Panc1 (cell line): ENCODE measurements at regions of chr3 and their contacts with region 1.

Region 1: DNA sequence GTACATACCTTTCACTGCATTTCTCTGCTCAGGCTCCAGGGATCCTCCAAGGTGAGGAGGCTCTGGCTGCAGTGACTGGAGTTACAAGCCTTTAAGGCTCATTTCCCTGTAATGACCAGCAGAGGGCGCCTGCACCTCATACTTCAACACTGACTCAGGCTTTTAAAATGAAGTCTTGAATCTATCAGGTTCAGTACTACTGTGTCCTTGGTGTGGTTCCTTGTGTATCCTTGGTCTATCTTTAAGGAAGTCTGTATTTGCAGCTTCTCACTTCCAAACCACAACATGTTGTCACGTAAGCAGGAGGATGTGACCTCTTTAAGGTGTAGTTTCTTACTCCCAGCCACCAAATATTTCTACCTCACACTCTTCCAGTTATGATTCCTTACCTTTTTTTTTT is 122.5 kb upstream of the ZBED2 start:
- DNase-seq: peak; percentile 71
- ATAC-seq: peak; percentile 98
- H3K4me3 ChIP-seq: no peak overlapping the region
- H3K27ac ChIP-seq: no peak overlapping the region
- H3K4me1 ChIP-seq: no peaks in the 10 kb centered on the region; the same call in 1 of the 2 replicates
- H3K27me3 ChIP-seq: peaks cover 2% of the 10 kb centered on the region; the same call in 1 of the 2 replicates
- CTCF ChIP-seq: peak; percentile 94

Region 2: GRCh38 chr3:111392901-111393351 is 324.7 kb before region 1 on chr3:
- CTCF ChIA-PET with region 1: no interaction called
- POLR2A ChIA-PET with region 1: no interaction called
- in situ Hi-C with region 1: no loop called
- intact Hi-C with region 1: no loop called
- DNase-seq: no peak
- ATAC-seq: no peak
- H3K4me3 ChIP-seq: no peak overlapping the region
- H3K27ac ChIP-seq: no peak overlapping the region
- H3K4me1 ChIP-seq: no peaks in the 10 kb centered on the region
- H3K27me3 ChIP-seq: no peaks in the 10 kb centered on the region
- CTCF ChIP-seq: no peak

Region 3: DNA sequence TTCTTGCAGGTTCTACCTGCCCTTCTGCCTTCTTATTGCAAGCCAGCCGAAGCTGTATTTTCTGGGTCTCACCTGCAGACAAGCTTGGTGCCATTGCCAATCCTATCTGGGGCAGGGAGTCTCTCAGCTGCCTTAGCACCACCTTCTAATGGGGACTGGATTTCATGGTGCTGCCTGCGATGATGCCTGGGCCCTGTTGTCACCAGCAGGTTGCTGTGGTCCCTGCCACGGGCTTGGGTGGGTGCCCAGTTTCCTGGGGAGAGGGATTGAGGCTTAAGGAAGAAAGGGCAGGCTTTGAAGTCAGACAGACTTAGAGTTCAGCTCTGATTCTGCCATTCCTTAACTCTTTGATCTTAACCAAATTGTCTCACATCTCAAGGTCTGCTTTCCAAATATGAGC is 263.1 kb before region 1 on chr3:
- CTCF ChIA-PET with region 1: no interaction called
- POLR2A ChIA-PET with region 1: no interaction called
- in situ Hi-C with region 1: no loop called
- intact Hi-C with region 1: no loop called
- DNase-seq: no peak
- ATAC-seq: no peak
- H3K4me3 ChIP-seq: no peak overlapping the region
- H3K27ac ChIP-seq: no peak overlapping the region
- H3K4me1 ChIP-seq: no peaks in the 10 kb centered on the region
- H3K27me3 ChIP-seq: no peaks in the 10 kb centered on the region
- CTCF ChIP-seq: no peak

Region 4: DNA sequence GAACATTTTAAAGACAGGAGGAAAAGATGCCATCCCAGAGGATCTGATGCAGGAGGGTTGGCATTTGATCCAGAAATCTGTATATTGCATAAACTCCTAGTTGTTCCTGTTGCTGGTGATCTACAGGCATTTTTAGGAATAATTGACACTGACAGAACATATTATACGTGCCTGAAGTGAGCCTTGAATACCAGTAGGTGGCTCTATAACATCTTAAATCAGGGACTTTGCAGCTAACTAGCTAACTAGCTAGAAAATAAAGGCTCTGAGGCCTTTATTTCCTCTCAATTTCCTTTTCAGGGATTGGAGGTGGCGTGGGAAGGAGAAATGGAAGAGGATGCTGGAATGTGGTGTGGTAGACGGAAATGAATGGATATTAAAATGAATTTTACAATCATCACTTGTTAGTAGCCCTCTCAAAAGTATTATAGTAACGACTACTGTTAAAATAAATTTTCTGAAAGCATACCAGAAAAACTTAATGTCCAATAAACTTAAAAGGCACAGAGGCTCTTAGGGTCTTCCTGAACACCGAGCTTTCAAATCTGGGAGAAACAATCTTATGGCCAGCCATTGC is 48.6 kb before region 1 on chr3:
- CTCF ChIA-PET with region 1: interaction called, 7 read pairs
- POLR2A ChIA-PET with region 1: no interaction called
- in situ Hi-C with region 1: no loop called
- intact Hi-C with region 1: loop called (anchors 1 kb)
- DNase-seq: peak; percentile 33
- ATAC-seq: peak; percentile 85
- H3K4me3 ChIP-seq: no peak overlapping the region
- H3K27ac ChIP-seq: no peak overlapping the region
- H3K4me1 ChIP-seq: peaks cover 5% of the 10 kb centered on the region; the same call in 1 of the 2 replicates
- H3K27me3 ChIP-seq: peaks cover 9% of the 10 kb centered on the region
- CTCF ChIP-seq: peak; percentile 80

Region 5: GRCh38 chr3:111735271-111735758 is 17.7 kb after region 1 on chr3:
- CTCF ChIA-PET with region 1: no interaction called
- POLR2A ChIA-PET with region 1: no interaction called
- in situ Hi-C with region 1: no loop called
- intact Hi-C with region 1: no loop called
- DNase-seq: no peak
- ATAC-seq: peak; percentile 73
- H3K4me3 ChIP-seq: no peak overlapping the region
- H3K27ac ChIP-seq: no peak overlapping the region
- H3K4me1 ChIP-seq: peaks cover 2% of the 10 kb centered on the region; the same call in 1 of the 2 replicates
- H3K27me3 ChIP-seq: no peaks in the 10 kb centered on the region
- CTCF ChIP-seq: no peak

Region 6: GRCh38 chr3:111859974-111860859 is 142.6 kb after region 1 on chr3:
- CTCF ChIA-PET with region 1: interaction called, 9 read pairs
- POLR2A ChIA-PET with region 1: no interaction called
- in situ Hi-C with region 1: no loop called
- intact Hi-C with region 1: loop called (anchors 2 kb)
- DNase-seq: peak; percentile 27
- ATAC-seq: peak; percentile 89
- H3K4me3 ChIP-seq: peak overlapping the region; percentile 52 to 83
- H3K27ac ChIP-seq: peak overlapping the region; percentile 65; the same call in 1 of the 2 replicates
- H3K4me1 ChIP-seq: peaks cover 8% of the 10 kb centered on the region; the same call in 1 of the 2 replicates
- H3K27me3 ChIP-seq: peaks cover 9% of the 10 kb centered on the region
- CTCF ChIP-seq: peak; percentile 60

Region 7: DNA sequence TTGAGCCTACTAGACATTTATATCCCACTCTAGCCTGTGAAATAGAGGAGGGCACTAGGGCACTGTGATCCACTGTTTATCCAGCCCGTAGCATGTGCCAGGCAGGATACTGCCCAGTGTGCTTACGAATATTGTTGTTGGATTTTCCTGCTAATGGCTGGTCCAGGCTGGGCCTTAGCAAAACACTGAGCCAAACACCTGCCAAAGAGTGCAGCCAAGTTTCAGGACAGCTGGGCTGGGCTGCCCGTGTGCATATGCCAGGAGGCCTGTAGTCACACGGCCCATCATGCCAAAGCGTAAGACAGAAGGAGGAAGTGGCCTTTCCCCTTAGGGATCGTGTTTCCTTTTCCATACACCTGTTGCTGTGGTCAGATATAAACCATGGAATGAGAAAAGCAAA is 206.7 kb after region 1 on chr3:
- CTCF ChIA-PET with region 1: no interaction called
- POLR2A ChIA-PET with region 1: no interaction called
- in situ Hi-C with region 1: no loop called
- intact Hi-C with region 1: no loop called
- DNase-seq: no peak
- ATAC-seq: no peak
- H3K4me3 ChIP-seq: no peak overlapping the region
- H3K27ac ChIP-seq: no peak overlapping the region
- H3K4me1 ChIP-seq: no peaks in the 10 kb centered on the region
- H3K27me3 ChIP-seq: no peaks in the 10 kb centered on the region
- CTCF ChIP-seq: no peak